MCF 10A (cell line): ENCODE measurements at regions of chr6 and their contacts with region 1.

Region 1: DNA sequence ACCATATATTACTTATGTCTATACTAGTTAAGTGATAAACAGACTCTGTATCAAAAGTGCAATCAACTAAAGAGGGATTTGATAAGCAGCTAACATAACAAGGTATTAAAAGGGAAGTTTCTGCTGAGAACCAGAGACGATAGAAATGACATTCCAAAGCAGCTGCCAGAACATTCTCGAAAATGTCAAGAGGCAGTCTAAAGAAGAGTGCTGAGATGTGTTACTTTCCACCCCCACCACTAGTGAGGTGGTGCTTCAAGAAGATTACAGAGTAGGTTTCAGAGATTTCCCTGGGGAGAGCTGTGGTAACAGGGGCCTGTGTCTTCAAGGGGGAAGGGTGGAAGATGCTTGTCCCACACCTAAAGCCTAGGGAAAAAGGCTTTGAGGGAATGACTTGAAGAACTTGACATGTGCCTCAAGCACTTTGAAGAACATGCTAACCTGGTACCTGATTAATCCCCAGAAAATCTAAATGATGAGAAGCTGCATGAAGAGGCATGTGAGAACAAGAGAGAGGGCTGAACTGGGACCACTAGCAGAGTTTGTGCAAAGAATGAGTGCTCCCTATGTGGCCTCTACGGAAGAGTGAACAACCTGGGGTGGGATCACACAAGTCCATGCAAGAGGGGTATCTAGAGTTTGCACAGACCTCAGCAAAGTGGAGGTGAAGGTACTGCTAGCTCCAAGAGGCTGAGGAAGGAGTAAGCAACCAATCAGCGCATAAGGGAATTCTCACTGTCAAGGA is 5.0 kb downstream of the FAM184A start:
- DNase-seq: no peak
- H3K4me3 Mint-ChIP-seq: no peak overlapping the region
- H3K27ac Mint-ChIP-seq: no peak overlapping the region
- H3K4me1 Mint-ChIP-seq: peaks cover 6% of the 10 kb centered on the region
- H3K27me3 Mint-ChIP-seq: no peaks in the 10 kb centered on the region
- CTCF ChIP-seq: no peak

Region 2: DNA sequence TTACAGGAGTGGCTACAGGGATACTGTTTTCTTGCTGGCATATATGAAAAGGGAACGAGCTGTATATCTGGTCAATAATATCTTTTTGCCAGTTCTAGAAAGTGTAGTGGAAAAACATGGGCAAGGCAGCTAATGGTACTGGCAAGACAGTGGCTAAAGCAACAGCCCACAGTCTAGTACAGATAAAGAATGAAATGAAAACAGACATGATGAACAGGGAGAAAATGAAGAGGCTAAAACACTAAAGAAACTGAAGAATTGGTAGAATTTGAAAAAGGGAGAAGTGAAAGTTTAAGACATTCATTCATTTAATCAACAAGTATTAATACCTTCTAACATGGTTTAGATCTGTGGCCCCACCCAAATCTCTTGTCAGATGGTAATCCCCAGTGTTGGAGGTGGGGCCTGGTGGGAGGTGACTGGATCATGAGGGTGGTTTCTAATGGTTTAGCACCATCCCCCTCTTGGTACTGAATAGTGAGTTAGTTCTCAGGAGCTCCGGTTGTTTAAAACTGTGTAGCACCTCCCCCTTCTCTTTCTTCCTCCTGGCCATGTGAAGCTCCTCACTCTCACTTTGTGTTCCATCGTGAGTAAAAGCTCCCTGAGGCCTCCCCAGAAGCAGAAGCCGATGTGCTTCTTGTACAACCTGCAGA is 13.1 kb before region 1 on chr6:
- CTCF ChIA-PET with region 1: interaction called, 7 read pairs
- POLR2A ChIA-PET with region 1: interaction called, 3 read pairs
- intact Hi-C with region 1: loop called (anchors 1 kb)
- DNase-seq: no peak
- H3K4me3 Mint-ChIP-seq: no peak overlapping the region
- H3K27ac Mint-ChIP-seq: no peak overlapping the region
- H3K4me1 Mint-ChIP-seq: no peaks in the 10 kb centered on the region
- H3K27me3 Mint-ChIP-seq: no peaks in the 10 kb centered on the region
- CTCF ChIP-seq: no peak